Activated CD4-positive, alpha-beta memory T cell treated with anti-CD3 and anti-CD28 coated beads for 36 hours (primary cell): ENCODE measurements at regions of chr2 and their contacts with region 1.

Region 1: DNA sequence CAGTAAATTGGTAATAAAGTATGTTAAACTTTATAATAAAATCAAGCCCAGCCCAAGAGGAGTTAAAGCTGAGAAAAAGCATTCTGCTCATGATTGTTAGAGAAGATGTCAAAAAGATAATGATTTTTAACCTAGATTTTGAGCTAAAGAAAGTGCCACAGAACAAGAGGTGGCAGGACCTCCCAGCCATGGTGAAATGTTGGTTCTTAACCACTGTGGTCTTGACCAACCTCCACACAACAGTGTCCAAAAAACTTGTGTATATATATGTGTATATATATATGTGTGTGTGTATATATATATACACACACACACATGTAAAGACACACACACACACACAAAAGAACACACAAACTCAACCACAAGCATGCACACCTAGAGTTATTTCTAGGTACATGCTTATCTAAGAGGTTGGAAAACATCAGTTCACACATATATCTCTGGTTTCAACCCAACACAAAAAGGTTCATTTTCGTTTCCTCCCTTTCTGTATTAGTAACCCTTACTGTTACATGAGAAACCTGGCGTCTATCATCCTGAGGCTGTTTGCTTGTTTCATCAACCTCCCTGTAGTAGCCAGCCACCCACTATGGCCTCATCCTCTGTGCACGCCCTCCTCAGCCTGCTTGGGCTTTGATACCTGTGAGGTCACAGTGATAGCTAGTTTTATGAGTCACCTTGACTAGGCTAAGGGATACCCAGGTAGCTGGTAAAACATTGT is 631.8 kb upstream of the ID2 start:
- DNase-seq: peak; percentile 88
- H3K4me3 Mint-ChIP-seq: no peak overlapping the region
- H3K27ac Mint-ChIP-seq: peak overlapping the region; percentile 78
- H3K4me1 Mint-ChIP-seq: peaks cover 28% of the 10 kb centered on the region
- H3K27me3 Mint-ChIP-seq: peaks cover 1% of the 10 kb centered on the region

Region 2: DNA sequence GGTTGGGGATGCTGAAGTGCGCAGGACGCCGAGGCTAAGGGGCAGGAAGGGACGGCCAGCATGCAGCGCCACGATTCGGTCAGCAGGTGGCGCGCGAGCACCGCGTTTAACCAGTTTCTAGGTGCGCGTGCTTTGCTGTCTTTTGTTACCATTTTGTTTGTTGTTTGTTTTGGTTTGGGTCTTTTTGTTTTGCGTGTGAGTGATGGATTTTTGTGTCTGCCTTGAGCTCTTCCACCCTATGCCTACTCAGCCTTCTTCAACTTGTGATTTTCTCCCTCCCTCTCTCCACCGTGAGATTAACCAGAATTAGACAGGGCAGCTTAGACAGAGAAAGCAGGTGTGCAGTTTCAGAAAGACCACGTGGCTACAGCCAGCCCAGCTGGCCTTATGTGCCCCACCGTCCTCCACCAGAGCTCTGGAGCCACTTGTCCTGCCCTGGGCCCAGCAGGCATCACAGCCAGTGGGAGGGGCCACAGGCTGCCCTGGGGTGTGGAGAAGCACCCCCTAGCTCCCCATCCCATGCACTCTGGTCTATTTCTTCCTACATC is 952.6 kb before region 1 on chr2:
- CTCF ChIA-PET with region 1: no interaction called
- POLR2A ChIA-PET with region 1: no interaction called
- intact Hi-C with region 1: loop called (anchors 10 kb)
- DNase-seq: peak; percentile 82
- H3K4me3 Mint-ChIP-seq: no peak overlapping the region
- H3K27ac Mint-ChIP-seq: no peak overlapping the region
- H3K4me1 Mint-ChIP-seq: peaks cover 7% of the 10 kb centered on the region
- H3K27me3 Mint-ChIP-seq: no peaks in the 10 kb centered on the region

Region 3: GRCh38 chr2:7523481-7524120 is 526.4 kb before region 1 on chr2:
- CTCF ChIA-PET with region 1: no interaction called
- POLR2A ChIA-PET with region 1: no interaction called
- intact Hi-C with region 1: no loop called
- DNase-seq: no peak
- H3K4me3 Mint-ChIP-seq: peak overlapping the region; percentile 58
- H3K27ac Mint-ChIP-seq: peak overlapping the region; percentile 91
- H3K4me1 Mint-ChIP-seq: peaks cover 50% of the 10 kb centered on the region
- H3K27me3 Mint-ChIP-seq: no peaks in the 10 kb centered on the region

Region 4: GRCh38 chr2:7825591-7826312 is 224.3 kb before region 1 on chr2:
- CTCF ChIA-PET with region 1: no interaction called
- POLR2A ChIA-PET with region 1: no interaction called
- intact Hi-C with region 1: loop called (anchors 1 kb)
- DNase-seq: peak; percentile 87
- H3K4me3 Mint-ChIP-seq: no peak overlapping the region
- H3K27ac Mint-ChIP-seq: peak overlapping the region; percentile 89
- H3K4me1 Mint-ChIP-seq: peaks cover 34% of the 10 kb centered on the region
- H3K27me3 Mint-ChIP-seq: peaks cover 3% of the 10 kb centered on the region

Region 5: DNA sequence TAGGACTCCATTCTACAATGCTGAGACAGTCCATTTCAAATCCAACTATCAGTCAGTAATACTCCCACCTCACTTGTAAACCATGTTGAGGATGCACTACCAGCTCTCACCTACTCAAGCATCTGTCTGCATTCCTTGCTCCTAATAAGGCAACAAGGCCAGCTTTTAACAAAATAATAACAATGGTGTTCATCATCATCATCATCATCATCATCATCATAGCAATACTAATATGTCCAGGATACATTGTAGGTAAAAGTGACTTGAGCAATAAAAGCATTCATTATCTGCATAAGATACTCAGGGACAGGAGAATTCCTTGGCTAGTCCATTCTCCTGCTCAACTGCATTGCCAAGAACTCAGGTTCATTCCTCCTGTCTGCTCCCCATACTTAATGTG is 111.6 kb before region 1 on chr2:
- CTCF ChIA-PET with region 1: no interaction called
- POLR2A ChIA-PET with region 1: no interaction called
- intact Hi-C with region 1: loop called (anchors 2 kb)
- DNase-seq: no peak
- H3K4me3 Mint-ChIP-seq: no peak overlapping the region
- H3K27ac Mint-ChIP-seq: no peak overlapping the region
- H3K4me1 Mint-ChIP-seq: peaks cover 22% of the 10 kb centered on the region
- H3K27me3 Mint-ChIP-seq: peaks cover 6% of the 10 kb centered on the region

Region 6: DNA sequence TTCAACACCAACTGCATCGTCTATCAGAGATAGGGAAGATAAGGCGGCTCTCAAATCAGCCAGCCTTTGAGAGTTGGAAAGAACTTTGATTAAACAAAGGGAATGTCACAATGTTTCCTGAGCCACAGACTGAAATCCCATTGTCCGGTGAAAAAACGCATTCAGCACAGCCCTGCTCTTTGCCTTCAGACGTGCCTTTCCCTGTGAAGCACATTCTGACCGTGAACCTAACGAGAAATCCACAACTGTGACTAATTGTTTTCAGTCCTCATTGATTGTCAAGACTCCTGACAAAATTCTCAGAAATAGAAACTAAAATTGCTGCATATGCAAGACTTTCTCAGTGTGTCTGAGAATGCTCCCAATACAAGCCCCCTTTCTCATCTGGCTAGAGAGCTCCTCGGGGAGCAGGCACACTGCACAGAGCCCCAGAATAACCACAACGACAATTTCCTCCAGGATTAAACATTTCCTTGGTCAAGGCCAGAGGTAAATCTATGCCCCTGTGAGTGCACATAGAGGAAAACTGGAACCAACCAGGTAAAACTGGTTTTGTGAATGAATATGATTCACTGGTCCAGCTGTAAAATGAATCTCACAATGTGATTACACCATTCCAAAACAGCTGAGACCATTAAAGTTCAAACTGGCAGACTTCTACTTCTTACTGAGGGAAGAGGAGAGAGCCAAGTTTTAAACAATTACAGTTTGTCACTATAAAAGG is 69.9 kb after region 1 on chr2:
- CTCF ChIA-PET with region 1: no interaction called
- POLR2A ChIA-PET with region 1: no interaction called
- intact Hi-C with region 1: loop called (anchors 2 kb)
- DNase-seq: no peak
- H3K4me3 Mint-ChIP-seq: peak overlapping the region; percentile 21
- H3K27ac Mint-ChIP-seq: peak overlapping the region; percentile 69
- H3K4me1 Mint-ChIP-seq: peaks cover 17% of the 10 kb centered on the region
- H3K27me3 Mint-ChIP-seq: peaks cover 2% of the 10 kb centered on the region

Region 7: DNA sequence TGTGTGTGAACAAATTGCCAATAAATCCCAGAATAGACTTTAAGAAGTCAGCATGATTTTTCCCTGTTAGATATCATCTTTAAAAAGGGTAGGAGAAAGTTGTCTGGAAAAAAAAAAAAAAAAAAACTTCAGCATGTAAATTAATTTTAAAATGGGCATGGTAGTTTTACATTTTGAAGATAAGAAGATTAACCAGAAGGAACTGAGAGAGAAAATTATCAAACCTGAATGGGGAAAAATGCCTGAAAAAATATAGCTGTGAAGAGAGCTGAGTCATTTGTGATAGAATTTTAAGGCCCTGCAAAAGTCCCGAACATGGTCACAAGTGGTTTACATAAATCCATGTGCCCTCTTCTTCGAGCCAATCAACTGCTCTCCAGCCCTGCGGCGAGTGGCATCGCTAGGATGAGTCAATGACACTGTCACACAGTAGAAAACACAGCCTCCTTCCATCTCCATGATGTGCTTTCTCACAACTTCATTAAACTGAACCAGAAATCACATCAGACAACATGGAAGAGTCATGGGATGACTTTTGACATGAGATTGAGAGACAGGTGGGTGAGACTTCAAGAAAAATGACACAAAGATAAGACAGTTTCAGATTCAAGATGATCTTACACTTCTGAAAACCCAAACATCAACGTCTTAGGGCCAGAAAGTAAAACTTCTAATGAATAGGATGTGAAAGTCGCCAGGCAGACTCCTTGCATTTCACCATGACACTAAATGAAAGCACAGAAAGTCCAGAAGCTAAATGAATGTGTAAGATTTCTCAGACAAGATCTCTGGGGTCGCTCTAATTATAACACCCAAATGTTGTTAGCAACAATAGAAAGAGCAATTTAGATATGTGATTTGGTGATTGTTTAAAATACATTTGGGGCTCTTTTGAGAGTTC is 358.8 kb after region 1 on chr2:
- CTCF ChIA-PET with region 1: no interaction called
- POLR2A ChIA-PET with region 1: no interaction called
- intact Hi-C with region 1: loop called (anchors 5 kb)
- DNase-seq: peak; percentile 91
- H3K4me3 Mint-ChIP-seq: peak overlapping the region; percentile 0
- H3K27ac Mint-ChIP-seq: peak overlapping the region; percentile 79
- H3K4me1 Mint-ChIP-seq: peaks cover 34% of the 10 kb centered on the region
- H3K27me3 Mint-ChIP-seq: no peaks in the 10 kb centered on the region